Calu3 (cell line): ENCODE measurements at regions of chr15 and their contacts with region 1.

Region 1: DNA sequence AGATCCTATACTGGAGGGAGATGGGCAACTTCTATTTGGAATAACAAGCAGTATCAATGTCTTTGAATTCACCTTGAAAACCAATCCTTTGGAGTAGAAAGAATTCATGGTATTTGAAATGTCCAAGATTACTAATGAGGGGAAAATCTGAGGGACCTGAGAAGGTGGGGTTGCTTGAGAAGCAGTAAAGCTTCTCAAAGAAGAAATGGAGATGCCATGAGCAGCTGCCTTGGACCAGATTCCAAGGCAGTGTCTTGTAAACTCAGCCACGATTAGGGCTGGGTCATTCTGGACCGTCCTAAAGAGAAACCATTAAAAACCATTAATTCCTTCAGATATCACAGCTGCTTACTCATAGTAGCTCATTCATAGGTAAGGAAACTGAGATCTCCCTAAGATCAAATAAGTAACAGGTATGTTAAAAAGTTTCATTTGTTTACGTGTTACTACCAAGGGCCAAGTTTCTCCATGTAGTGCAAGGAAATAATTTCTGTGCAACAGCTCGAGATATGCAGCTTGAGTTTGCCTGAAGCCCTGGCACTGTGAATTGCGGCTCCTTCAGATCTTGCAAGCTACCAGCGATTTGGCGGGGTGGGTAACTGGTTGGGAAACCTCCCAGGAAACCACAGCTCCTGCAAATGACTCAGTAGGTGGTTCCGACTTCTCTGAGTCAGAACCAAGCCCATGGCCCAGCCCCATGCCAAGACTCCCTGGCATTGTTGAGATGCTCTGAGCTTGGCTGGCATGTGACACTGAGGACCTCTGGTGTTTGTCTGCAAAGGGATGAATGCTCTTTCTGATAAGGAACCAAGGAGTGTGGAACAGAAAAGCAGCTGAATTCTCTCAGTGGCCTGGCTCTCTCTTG is 296.8 kb downstream of the RORA start:
- DNase-seq: peak; percentile 81
- H3K4me3 Mint-ChIP-seq: no peak overlapping the region
- H3K27ac Mint-ChIP-seq: no peak overlapping the region
- H3K4me1 Mint-ChIP-seq: peaks cover 27% of the 10 kb centered on the region
- H3K27me3 Mint-ChIP-seq: peaks cover 16% of the 10 kb centered on the region
- CTCF ChIP-seq: no peak

Region 2: DNA sequence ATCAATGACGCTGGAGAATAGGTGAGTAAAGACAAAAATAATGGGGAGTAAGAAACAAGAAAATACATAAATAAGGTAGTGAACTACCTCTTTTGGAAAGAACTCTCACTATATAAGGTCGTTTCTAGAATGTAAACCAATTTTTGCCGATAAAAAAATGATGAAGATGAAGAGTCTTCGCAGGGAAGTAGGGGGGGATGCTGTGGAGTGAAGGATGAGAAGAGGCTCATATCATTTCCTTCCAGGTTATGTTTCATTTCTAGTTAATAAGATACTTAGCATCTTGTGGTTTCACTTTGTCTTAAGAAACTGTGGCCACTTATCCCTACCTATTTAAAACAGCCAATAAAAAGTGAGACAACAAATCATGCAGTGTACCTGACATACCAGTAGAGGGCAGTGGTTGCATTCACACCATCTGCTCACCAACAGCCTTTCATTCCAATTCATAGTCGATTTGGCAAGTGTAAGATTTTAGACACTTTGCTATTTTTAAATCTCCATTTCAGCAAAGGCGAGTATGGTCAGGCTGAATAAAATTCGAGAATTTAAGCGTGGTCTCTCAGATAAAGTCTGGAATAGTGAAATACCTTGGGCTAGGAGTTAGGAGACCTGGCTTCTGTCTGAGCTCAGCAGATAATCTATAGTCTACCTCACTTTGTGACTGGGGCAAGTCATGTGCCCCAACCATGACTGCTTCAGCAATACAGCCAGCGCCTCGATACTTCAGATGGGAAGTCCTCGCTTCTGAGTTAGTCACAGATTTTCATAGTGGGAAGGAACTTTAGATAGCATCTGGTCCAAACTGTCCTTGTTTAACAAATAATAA is 424.5 kb before region 1 on chr15:
- CTCF ChIA-PET with region 1: interaction called, 3 read pairs
- intact Hi-C with region 1: loop called (anchors 5 kb)
- DNase-seq: peak; percentile 62
- H3K4me3 Mint-ChIP-seq: no peak overlapping the region
- H3K27ac Mint-ChIP-seq: no peak overlapping the region
- H3K4me1 Mint-ChIP-seq: peaks cover 12% of the 10 kb centered on the region
- H3K27me3 Mint-ChIP-seq: no peaks in the 10 kb centered on the region
- CTCF ChIP-seq: peak; percentile 67

Region 3: DNA sequence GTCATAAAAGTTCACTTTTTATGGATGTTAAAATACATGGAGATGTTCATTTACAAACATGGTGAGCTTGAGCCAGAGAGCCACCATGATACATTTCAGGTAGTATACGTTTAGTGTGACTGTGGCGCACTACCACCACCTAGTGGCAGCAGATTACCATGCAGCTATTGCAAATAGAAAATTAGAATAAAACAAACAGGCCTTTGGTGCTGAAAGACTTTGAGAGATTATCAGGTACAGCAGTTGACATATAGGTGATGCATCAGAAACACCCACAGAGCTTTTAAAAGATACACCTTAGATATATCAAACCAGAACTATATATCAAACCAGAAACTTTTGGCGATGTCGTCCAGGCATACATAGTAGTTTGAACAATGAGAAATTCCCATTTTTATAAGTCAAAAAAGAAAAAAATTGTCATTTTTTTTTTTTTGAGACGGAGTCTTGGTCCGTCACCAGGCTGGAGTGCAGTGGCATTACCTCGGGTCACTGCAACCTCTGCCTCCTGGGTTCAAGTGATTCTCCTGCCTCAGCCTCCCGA is 411.4 kb before region 1 on chr15:
- CTCF ChIA-PET with region 1: interaction called, 11 read pairs
- intact Hi-C with region 1: no loop called
- DNase-seq: peak; percentile 82
- H3K4me3 Mint-ChIP-seq: peak overlapping the region; percentile 8
- H3K27ac Mint-ChIP-seq: peak overlapping the region; percentile 73
- H3K4me1 Mint-ChIP-seq: peaks cover 19% of the 10 kb centered on the region
- H3K27me3 Mint-ChIP-seq: no peaks in the 10 kb centered on the region
- CTCF ChIP-seq: peak; percentile 89

Region 4: GRCh38 chr15:60585743-60586708 is 346.3 kb before region 1 on chr15:
- CTCF ChIA-PET with region 1: interaction called, 33 read pairs
- intact Hi-C with region 1: loop called (anchors 1 kb)
- DNase-seq: peak; percentile 76
- H3K4me3 Mint-ChIP-seq: no peak overlapping the region
- H3K27ac Mint-ChIP-seq: no peak overlapping the region
- H3K4me1 Mint-ChIP-seq: peaks cover 9% of the 10 kb centered on the region
- H3K27me3 Mint-ChIP-seq: peaks cover 38% of the 10 kb centered on the region
- CTCF ChIP-seq: peak; percentile 76

Region 5: GRCh38 chr15:60592371-60593169 is 339.7 kb before region 1 on chr15:
- CTCF ChIA-PET with region 1: interaction called, 9 read pairs
- intact Hi-C with region 1: loop called (anchors 1 kb)
- DNase-seq: peak; percentile 84
- H3K4me3 Mint-ChIP-seq: peak overlapping the region; percentile 82
- H3K27ac Mint-ChIP-seq: peak overlapping the region; percentile 44
- H3K4me1 Mint-ChIP-seq: no peaks in the 10 kb centered on the region
- H3K27me3 Mint-ChIP-seq: peaks cover 72% of the 10 kb centered on the region
- CTCF ChIP-seq: no peak

Region 6: GRCh38 chr15:60883691-60884640 is 48.3 kb before region 1 on chr15:
- CTCF ChIA-PET with region 1: no interaction called
- intact Hi-C with region 1: no loop called
- DNase-seq: no peak
- H3K4me3 Mint-ChIP-seq: no peak overlapping the region
- H3K27ac Mint-ChIP-seq: no peak overlapping the region
- H3K4me1 Mint-ChIP-seq: no peaks in the 10 kb centered on the region
- H3K27me3 Mint-ChIP-seq: peaks cover 81% of the 10 kb centered on the region
- CTCF ChIP-seq: no peak

Region 7: GRCh38 chr15:60916679-60917460 is 15.4 kb before region 1 on chr15:
- CTCF ChIA-PET with region 1: interaction called, 37 read pairs
- intact Hi-C with region 1: no loop called
- DNase-seq: peak; percentile 88
- H3K4me3 Mint-ChIP-seq: peak overlapping the region; percentile 37
- H3K27ac Mint-ChIP-seq: peak overlapping the region; percentile 88
- H3K4me1 Mint-ChIP-seq: peaks cover 34% of the 10 kb centered on the region
- H3K27me3 Mint-ChIP-seq: no peaks in the 10 kb centered on the region
- CTCF ChIP-seq: peak; percentile 84

Region 8: GRCh38 chr15:61122647-61123375 is 190.5 kb after region 1 on chr15:
- CTCF ChIA-PET with region 1: no interaction called
- intact Hi-C with region 1: no loop called
- DNase-seq: no peak
- H3K4me3 Mint-ChIP-seq: no peak overlapping the region
- H3K27ac Mint-ChIP-seq: no peak overlapping the region
- H3K4me1 Mint-ChIP-seq: no peaks in the 10 kb centered on the region
- H3K27me3 Mint-ChIP-seq: peaks cover 66% of the 10 kb centered on the region
- CTCF ChIP-seq: no peak